Activated T-helper 2 cell treated with anti-CD3 and anti-CD28 coated beads, Interferon-gamma antibody, Interleukin-2, Interleukin-4, amounts not matched to agents 10 μg/mL and 5 μg/mL and 100 μg/mL, durations not matched to agents 14 hours and 24 hours and 36 hours (primary cell): ENCODE measurements at regions of chr7 and their contacts with region 1.

Region 1: DNA sequence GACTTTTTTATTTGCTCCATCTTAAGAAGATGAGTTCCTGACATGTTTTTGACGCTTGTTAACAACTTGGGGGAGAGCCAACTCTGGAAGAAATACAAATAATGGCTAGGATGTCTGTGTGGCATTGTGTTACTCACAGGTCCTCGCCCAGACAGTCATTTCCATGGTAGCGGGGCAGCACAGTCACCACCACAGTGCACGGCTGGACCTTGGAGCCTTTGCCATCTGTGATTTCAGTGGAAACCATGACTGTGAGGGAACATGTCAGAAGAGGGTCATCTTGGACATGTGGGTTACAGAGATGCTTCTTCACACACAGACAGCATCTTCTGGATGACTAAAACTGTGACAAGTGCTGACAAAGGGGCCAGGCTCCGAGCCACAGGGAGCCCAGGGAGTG is 74.5 kb downstream of the PKD1L1 start:
- DNase-seq: no peak
- H3K4me3 Mint-ChIP-seq: no peak overlapping the region
- H3K27ac Mint-ChIP-seq: no peak overlapping the region
- H3K4me1 Mint-ChIP-seq: peaks cover 33% of the 10 kb centered on the region
- H3K27me3 Mint-ChIP-seq: no peaks in the 10 kb centered on the region

Region 2: GRCh38 chr7:47482013-47482875 is 391.5 kb before region 1 on chr7:
- intact Hi-C with region 1: loop called (anchors 5 kb)
- DNase-seq: no peak
- H3K4me3 Mint-ChIP-seq: peak overlapping the region; percentile 20
- H3K27ac Mint-ChIP-seq: peak overlapping the region; percentile 81
- H3K4me1 Mint-ChIP-seq: peaks cover 32% of the 10 kb centered on the region
- H3K27me3 Mint-ChIP-seq: no peaks in the 10 kb centered on the region

Region 3: DNA sequence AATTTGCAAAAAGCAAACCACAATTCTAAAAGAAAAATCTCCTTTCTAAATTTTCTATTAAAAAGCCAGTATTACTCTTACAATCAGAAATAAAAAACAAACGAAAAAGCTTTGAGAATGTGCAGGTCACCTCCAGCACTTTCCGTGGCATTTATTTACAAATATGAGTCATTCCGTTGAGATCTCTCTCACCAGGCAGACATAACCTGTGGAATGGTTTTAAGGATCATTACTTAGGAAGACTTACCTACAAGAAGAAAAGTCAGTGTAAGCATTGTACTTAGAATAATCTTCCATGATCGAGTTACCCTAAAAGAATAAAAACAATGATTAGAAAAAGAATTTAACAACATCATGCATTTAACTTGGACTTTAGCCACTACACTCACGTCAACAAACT is 151.9 kb after region 1 on chr7:
- intact Hi-C with region 1: no loop called
- DNase-seq: no peak
- H3K4me3 Mint-ChIP-seq: no peak overlapping the region
- H3K27ac Mint-ChIP-seq: no peak overlapping the region
- H3K4me1 Mint-ChIP-seq: no peaks in the 10 kb centered on the region
- H3K27me3 Mint-ChIP-seq: peaks cover 57% of the 10 kb centered on the region

Region 4: DNA sequence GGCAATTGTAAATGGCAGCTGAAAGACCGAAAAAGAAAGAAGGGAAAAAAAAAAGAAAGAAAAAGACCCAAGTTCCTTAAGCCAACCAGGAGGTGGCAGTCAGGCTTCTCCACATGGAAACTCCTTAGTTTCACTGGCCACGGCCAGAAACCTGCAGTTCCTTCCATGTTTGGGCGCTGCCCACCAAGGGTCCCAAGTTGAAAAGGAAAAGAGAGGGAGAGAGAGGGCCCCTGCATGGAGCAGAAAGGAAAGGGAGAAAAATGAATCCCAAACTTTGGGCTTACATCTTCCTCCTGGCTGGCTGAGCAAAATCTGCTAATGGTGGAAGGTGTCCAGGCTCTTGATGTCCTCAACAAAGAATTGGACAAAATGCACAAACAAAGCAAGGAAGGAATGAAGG is 265.7 kb after region 1 on chr7:
- intact Hi-C with region 1: loop called (anchors 10 kb)
- DNase-seq: no peak
- H3K4me3 Mint-ChIP-seq: no peak overlapping the region
- H3K27ac Mint-ChIP-seq: no peak overlapping the region
- H3K4me1 Mint-ChIP-seq: peaks cover 6% of the 10 kb centered on the region
- H3K27me3 Mint-ChIP-seq: peaks cover 22% of the 10 kb centered on the region

Region 5: GRCh38 chr7:48274662-48275061 is 400.9 kb after region 1 on chr7:
- intact Hi-C with region 1: loop called (anchors 5 kb)
- DNase-seq: no peak
- H3K4me3 Mint-ChIP-seq: no peak overlapping the region
- H3K27ac Mint-ChIP-seq: no peak overlapping the region
- H3K4me1 Mint-ChIP-seq: peaks cover 28% of the 10 kb centered on the region
- H3K27me3 Mint-ChIP-seq: peaks cover 5% of the 10 kb centered on the region